AG04450 (cell line): ENCODE measurements at regions of chr6 and their contacts with region 1.

Region 1: DNA sequence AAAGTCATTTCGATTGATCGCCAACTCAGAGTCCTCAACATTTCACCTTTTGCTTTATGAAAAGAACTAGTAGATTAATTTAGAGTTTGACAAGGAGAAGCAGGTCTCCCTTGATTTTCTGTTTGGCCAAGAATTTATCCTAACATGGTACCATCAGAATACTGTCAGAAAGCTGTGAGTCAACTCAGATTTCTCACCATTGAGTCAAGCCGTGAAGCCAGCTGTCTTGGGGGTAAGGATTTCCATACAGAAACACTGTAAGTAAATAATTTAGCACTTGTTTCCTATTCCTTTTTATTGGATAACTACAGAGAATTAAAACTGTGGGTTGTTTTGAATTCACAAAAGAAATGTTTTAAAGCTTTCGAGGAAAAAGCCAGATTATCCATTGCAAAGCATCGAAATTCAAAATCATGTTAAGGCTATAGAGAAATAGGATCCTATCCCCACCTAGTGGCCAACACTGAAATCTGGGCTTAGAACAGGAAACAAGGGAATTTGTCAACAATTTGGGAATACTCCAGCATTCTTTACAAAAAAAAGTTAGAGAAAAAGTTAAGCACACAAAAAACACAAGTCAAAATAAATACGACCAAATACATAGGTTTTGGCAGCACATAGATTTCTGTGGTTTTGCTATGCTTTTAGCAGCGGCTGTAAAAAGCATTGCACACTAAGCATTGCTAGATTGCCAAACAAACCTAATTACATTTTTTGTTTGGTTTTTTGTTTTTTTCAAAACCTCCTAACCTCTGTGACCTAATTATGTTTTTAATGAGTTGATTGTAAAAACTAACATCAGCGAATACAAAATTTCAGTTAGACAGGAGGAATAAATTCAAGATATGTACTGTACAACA is 44.2 kb downstream of the COL11A2 start:
- DNase-seq: peak; percentile 32
- H3K4me3 ChIP-seq: no peak overlapping the region
- H3K27ac ChIP-seq: no peak overlapping the region
- H3K27me3 ChIP-seq: peaks cover 16% of the 10 kb centered on the region
- CTCF ChIP-seq: peak; percentile 92

Region 2: DNA sequence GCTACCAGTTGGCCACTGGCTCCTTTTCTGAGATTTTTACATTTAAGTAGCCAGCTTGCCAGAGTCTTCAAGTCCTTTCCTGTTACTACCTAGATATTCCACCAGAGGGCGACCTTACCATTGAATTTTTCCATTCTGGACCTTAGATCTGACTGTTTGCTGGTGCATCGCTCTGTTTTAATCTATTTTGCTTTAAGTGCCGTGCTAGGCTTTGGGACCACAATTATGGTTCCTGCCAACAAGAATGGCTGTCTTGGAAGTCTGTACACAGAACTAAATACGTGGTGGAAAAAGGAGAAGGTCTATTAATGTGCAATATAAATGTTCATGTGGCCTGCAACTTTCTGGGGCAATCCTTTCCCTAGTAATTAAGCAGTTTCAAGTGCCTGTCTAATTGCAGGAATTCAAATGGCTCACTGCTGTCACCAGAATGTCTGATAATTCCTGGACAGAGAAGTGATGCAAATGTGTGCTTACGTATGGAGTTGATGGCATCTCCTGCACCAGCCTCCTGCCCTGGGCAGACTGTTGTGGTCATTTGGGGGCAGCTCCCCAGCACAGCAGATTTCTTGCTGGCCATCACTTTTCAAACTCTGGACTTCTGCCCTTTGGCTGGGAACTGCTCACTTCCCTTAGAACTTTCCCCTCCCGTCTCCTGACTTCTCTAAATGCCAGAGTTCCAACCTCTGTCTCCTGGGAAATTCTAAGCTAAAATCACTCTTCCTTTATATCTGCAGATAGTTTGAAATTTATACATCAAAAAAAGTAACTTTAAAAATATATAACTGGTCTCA is 133.0 kb before region 1 on chr6:
- CTCF ChIA-PET with region 1: interaction called, 10 read pairs
- POLR2A ChIA-PET with region 1: no interaction called
- DNase-seq: peak; percentile 73
- H3K4me3 ChIP-seq: no peak overlapping the region
- H3K27ac ChIP-seq: no peak overlapping the region
- H3K27me3 ChIP-seq: peaks cover 42% of the 10 kb centered on the region
- CTCF ChIP-seq: peak; percentile 69

Region 3: GRCh38 chr6:33040157-33040556 is 107.9 kb before region 1 on chr6:
- CTCF ChIA-PET with region 1: no interaction called
- POLR2A ChIA-PET with region 1: no interaction called
- DNase-seq: no peak
- H3K4me3 ChIP-seq: no peak overlapping the region
- H3K27ac ChIP-seq: no peak overlapping the region
- H3K27me3 ChIP-seq: peaks cover 2% of the 10 kb centered on the region
- CTCF ChIP-seq: no peak

Region 4: GRCh38 chr6:33118525-33119123 is 29.4 kb before region 1 on chr6:
- CTCF ChIA-PET with region 1: interaction called, 34 read pairs
- POLR2A ChIA-PET with region 1: no interaction called
- DNase-seq: peak; percentile 8
- H3K4me3 ChIP-seq: no peak overlapping the region
- H3K27ac ChIP-seq: no peak overlapping the region
- H3K27me3 ChIP-seq: peaks cover 39% of the 10 kb centered on the region
- CTCF ChIP-seq: peak; percentile 73

Region 5: GRCh38 chr6:33161354-33162331 is 13.6 kb after region 1 on chr6:
- CTCF ChIA-PET with region 1: interaction called, 20 read pairs
- POLR2A ChIA-PET with region 1: no interaction called
- DNase-seq: no peak
- H3K4me3 ChIP-seq: peak overlapping the region; percentile 55
- H3K27ac ChIP-seq: no peak overlapping the region
- H3K27me3 ChIP-seq: peaks cover 11% of the 10 kb centered on the region
- CTCF ChIP-seq: peak; percentile 90